Dendritic cell treated with granulocyte-macrophage colony-stimulating factor and Interleukin-4, amounts not matched to agents 40 ng/mL and 50 ng/mL, for 4 days (primary cell): ENCODE measurements at regions of chr5 and their contacts with region 1.

Region 1: DNA sequence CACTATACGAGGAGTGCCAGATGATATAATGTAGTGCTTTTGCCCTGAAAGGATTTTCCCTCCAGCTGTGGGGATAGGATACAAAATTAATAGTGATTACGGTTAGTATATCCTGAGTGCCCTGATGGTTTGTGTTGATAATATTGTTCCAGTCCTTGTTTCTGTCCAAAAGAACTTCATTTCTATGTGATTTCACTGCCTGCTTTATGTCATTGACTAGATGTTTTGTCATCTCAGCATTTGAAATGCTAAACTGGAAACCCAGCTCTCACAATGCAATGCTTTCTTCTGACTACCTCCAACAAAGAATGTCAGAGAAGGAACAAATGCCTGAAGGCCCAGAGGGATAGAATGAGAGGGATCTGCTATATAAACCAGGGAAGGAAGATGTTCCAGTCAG is 177.8 kb downstream of the NIPBL start:
- H3K4me3 Mint-ChIP-seq: no peak overlapping the region
- H3K27ac Mint-ChIP-seq: no peak overlapping the region
- H3K4me1 Mint-ChIP-seq: no peaks in the 10 kb centered on the region
- H3K27me3 Mint-ChIP-seq: no peaks in the 10 kb centered on the region

Region 2: GRCh38 chr5:36969700-36970395 is 84.5 kb before region 1 on chr5:
- intact Hi-C with region 1: loop called (anchors 5 kb)
- H3K4me3 Mint-ChIP-seq: no peak overlapping the region
- H3K27ac Mint-ChIP-seq: no peak overlapping the region
- H3K4me1 Mint-ChIP-seq: no peaks in the 10 kb centered on the region
- H3K27me3 Mint-ChIP-seq: no peaks in the 10 kb centered on the region

Region 3: DNA sequence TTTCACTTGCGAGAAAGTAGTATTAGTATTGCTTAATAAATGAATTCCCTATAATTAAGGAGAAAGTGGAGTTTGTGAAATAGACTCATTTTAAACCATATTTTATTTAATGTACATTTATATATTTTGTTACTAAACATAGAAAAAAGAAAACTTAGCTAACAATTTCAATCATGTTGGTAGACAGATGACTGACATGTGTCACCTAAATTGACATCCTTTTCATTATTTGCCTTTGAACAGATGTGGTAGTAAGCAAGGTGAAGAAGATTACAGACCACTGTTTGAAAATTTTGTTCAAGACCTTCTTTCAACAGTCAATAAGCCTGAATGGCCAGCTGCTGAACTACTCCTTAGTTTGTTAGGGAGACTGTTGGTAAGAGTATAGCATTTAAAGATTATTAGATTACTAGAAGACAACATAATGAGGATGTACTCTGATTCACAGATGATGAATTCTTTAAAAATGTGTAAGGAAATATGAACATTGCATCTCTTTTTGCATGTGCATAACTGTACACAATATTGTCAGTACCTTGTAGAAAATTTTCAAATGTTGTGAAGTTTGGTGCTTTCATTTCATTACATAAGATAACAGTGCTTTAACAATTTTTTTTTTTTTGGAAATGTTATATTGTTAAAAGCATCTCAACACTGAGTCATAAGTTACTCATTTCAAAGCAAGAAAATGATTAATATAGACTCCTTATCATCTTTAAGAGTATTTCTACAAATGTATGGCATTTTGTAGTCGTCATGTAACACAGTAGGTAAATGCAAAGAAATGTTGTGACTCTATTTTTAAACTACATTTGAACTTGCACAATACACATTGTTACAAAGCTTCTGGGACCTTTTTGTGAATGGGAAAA is 38.4 kb before region 1 on chr5:
- intact Hi-C with region 1: loop called (anchors 5 kb)
- H3K4me3 Mint-ChIP-seq: no peak overlapping the region
- H3K27ac Mint-ChIP-seq: no peak overlapping the region
- H3K4me1 Mint-ChIP-seq: no peaks in the 10 kb centered on the region
- H3K27me3 Mint-ChIP-seq: no peaks in the 10 kb centered on the region

Region 4: DNA sequence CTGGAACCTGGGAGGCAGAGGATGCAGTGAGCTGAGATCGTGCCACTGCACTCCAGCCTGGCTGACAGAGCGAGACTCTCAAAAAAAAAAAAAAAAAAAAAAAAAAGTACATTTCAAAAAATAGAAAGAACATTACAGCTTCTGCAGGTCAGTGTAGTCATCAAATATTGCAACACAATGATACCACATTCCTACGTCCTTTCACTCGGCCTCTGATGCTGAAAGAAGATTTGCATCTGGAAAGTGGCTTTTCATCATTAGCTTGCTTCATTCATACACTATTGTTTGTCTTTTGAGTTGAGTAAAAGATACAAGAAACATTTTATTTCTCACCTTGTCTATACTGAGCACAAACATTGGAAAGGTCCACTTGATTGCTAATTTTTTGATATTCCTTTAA is 254.4 kb after region 1 on chr5:
- intact Hi-C with region 1: loop called (anchors 10 kb)
- H3K4me3 Mint-ChIP-seq: no peak overlapping the region
- H3K27ac Mint-ChIP-seq: no peak overlapping the region
- H3K4me1 Mint-ChIP-seq: no peaks in the 10 kb centered on the region
- H3K27me3 Mint-ChIP-seq: no peaks in the 10 kb centered on the region